Naive thymus-derived CD4-positive, alpha-beta T cell (primary cell): ENCODE measurements at regions of chr6 and their contacts with region 1.

Region 1: GRCh38 chr6:43174263-43175112 is 3.4 kb downstream of the SRF start:
- DNase-seq: peak; percentile 66 to 92 (median 88)
- ATAC-seq: peak; percentile 77
- H3K4me3 ChIP-seq: peak overlapping the region; percentile 72
- H3K4me3 Mint-ChIP-seq: peak overlapping the region; percentile 85 to 99 (median 96)
- H3K27ac ChIP-seq: peak overlapping the region; percentile 73
- H3K27ac Mint-ChIP-seq: peak overlapping the region; percentile 90 to 98 (median 94)
- H3K4me1 ChIP-seq: peaks cover 26 to 29% of the 10 kb centered on the region in 2 donors
- H3K4me1 Mint-ChIP-seq: peaks cover 35 to 49% (median 40%) of the 10 kb centered on the region in 7 donors
- H3K27me3 ChIP-seq: no peaks in the 10 kb centered on the region
- H3K27me3 Mint-ChIP-seq: peaks cover 0 to 2% (median 0%) of the 10 kb centered on the region in 5 donors

Region 2: GRCh38 chr6:42043787-42044475 is 1130.6 kb before region 1 on chr6:
- CTCF ChIA-PET with region 1: no interaction called
- POLR2A ChIA-PET with region 1: no interaction called
- intact Hi-C with region 1: loop called (anchors 5 kb)
- DNase-seq: peak; percentile 85 to 95 (median 91)
- ATAC-seq: peak; percentile 67
- H3K4me3 ChIP-seq: peak overlapping the region; percentile 59
- H3K4me3 Mint-ChIP-seq: peak overlapping the region; percentile 84 to 99 (median 95)
- H3K27ac ChIP-seq: peak overlapping the region; percentile 76
- H3K27ac Mint-ChIP-seq: peak overlapping the region; percentile 73 to 98 (median 94)
- H3K4me1 ChIP-seq: peaks cover 55 to 64% of the 10 kb centered on the region in 2 donors
- H3K4me1 Mint-ChIP-seq: peaks cover 53 to 89% (median 64%) of the 10 kb centered on the region in 7 donors
- H3K27me3 ChIP-seq: no peaks in the 10 kb centered on the region
- H3K27me3 Mint-ChIP-seq: no peaks in the 10 kb centered on the region

Region 3: DNA sequence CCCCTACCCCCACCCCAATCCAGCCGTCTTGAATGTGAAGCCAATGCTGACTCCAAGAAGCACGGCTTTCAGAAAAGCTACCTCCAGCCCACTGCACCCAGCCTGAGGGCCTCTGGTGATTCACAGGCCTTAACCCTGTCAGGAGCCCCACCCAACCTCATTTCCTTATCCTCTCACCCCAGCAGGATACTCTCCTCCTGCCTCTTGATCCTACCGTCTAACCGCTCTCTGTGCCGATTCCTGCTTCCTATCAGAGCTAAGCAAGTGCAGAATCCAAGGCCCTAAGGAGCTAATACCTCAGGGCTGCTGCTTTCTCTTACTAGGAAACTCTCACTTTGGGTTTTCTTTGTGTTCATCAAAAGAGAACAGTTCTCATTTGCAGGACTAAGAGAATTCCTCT is 770.0 kb before region 1 on chr6:
- CTCF ChIA-PET with region 1: no interaction called
- POLR2A ChIA-PET with region 1: no interaction called
- intact Hi-C with region 1: no loop called
- DNase-seq: no peak
- ATAC-seq: peak; percentile 75
- H3K4me3 ChIP-seq: no peak overlapping the region
- H3K4me3 Mint-ChIP-seq: peak overlapping the region; percentile 52 to 74 (median 68)
- H3K27ac ChIP-seq: peak overlapping the region; percentile 5
- H3K27ac Mint-ChIP-seq: peak overlapping the region; percentile 73 to 96 (median 89)
- H3K4me1 ChIP-seq: peaks cover 28 to 58% of the 10 kb centered on the region in 2 donors
- H3K4me1 Mint-ChIP-seq: peaks cover 53 to 93% (median 82%) of the 10 kb centered on the region in 7 donors
- H3K27me3 ChIP-seq: no peaks in the 10 kb centered on the region
- H3K27me3 Mint-ChIP-seq: no peaks in the 10 kb centered on the region

Region 4: DNA sequence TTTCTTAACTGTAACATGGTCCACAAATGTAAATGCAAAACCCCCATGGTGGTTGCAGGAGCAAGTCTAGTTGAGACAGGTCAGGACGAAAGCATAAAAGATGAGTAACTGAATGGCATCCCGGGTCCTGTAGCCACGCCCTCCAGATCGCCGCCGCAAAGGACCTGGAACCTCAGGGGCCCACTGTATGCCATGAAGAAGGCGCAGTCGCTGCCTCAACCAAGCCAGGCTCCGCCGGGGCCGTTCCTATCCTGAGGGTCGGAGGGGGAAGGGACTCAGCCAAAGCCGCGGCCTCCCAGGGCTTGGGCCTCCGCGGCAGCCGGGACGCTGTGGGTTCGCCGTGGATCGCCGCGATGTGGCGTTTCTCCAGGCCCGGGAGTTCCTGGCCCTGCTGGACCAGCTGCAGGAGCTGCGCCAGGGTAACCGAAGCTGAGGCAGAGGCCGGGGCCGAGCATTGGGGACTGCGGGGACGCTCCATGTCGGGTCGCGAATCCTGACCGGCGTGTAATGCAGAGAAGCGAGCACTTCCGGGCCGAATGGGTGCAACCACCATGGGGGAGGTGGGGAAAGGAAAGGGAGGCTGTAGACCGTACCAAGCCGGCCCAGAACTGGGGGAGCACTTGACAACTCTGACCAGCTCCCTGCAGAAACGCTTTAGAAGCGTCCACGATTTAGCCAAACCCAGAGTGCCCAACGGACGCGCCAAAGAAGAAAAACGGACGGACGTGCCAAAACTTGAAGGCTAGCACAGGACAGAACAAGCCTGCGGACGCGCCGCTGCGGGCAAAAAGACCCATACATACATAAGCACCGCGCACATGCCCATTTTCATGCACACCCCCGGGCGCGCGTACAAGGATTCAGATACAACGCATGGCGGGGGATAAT is 283.9 kb before region 1 on chr6:
- CTCF ChIA-PET with region 1: no interaction called
- POLR2A ChIA-PET with region 1: interaction called, 3 read pairs
- intact Hi-C with region 1: loop called in 1 of 2 experiments (anchors 1 kb)
- DNase-seq: peak; percentile 70 to 90 (median 87)
- ATAC-seq: peak; percentile 99
- H3K4me3 ChIP-seq: peak overlapping the region; percentile 89
- H3K4me3 Mint-ChIP-seq: peak overlapping the region; percentile 94 to 100 (median 98)
- H3K27ac ChIP-seq: peak overlapping the region; percentile 87
- H3K27ac Mint-ChIP-seq: peak overlapping the region; percentile 89 to 99 (median 98)
- H3K4me1 ChIP-seq: peaks cover 0 to 8% of the 10 kb centered on the region in 2 donors
- H3K4me1 Mint-ChIP-seq: peaks cover 0 to 26% (median 14%) of the 10 kb centered on the region in 7 donors
- H3K27me3 ChIP-seq: no peaks in the 10 kb centered on the region
- H3K27me3 Mint-ChIP-seq: no peaks in the 10 kb centered on the region

Region 5: DNA sequence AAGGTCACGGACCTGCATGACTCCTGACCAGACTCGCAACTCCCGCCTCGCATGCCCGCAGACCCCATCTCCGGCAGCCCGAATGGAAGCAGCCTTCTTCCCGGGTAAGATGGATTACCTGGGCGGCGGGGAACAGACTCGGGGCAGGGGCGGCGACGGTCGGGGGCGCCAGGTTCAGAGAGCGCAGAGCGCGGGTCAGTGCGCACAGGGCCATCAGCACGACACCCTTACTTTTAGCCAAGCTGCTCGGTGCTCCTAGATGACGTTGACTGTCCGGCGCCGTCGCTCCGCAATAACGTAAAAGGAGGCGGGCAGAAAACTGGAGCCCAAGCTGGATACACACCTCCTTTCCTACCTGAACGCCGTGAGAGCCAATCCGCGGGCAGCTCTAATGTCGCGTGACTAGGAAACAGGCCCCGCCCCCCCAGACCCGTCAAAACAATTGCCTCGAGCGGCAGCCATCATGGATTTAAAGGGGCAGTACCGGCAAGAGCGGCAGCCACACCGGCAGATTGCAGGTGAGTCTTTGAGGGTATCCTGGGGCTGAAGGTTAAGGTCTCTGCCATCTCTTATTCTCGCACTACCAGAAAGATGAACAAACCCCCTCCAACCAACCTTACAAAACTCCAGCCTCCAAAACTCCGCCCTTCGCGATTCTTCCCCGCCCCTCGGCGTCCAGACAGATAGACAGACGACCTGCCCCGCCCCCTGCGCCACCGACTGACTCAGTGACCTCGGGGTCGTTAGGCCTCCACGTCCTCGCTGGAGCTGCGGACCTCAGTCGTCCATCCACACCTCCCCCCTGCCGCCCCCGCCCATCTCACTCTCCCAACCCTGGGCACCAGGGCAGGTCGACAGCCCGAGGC is 115.1 kb before region 1 on chr6 and contains the starts of genes KLC4 and MRPL2:
- CTCF ChIA-PET with region 1: no interaction called
- POLR2A ChIA-PET with region 1: interaction called, 3 read pairs
- intact Hi-C with region 1: loop called (anchors 1 kb)
- DNase-seq: peak; percentile 79 to 98 (median 95)
- ATAC-seq: peak; percentile 99
- H3K4me3 ChIP-seq: peak within 1 kb of the TSS; percentile 80
- H3K4me3 Mint-ChIP-seq: peak within 1 kb of the TSS; percentile 88 to 100 (median 96)
- H3K27ac ChIP-seq: peak within 1 kb of the TSS; percentile 88
- H3K27ac Mint-ChIP-seq: peak within 1 kb of the TSS; percentile 95 to 100 (median 99)
- H3K4me1 ChIP-seq: peaks cover 0 to 21% of the 10 kb centered on the region in 2 donors
- H3K4me1 Mint-ChIP-seq: peaks cover 28 to 50% (median 45%) of the 10 kb centered on the region in 7 donors
- H3K27me3 ChIP-seq: no peaks in the 10 kb centered on the region
- H3K27me3 Mint-ChIP-seq: no peaks in the 10 kb centered on the region
- total RNA-seq, gene KLC4: 16.5 to 56.9 (median 42.5) TPM
- total RNA-seq, gene MRPL2: 32.0 to 57.5 (median 47.7) TPM

Region 6: GRCh38 chr6:43217351-43217750 is 42.9 kb after region 1 on chr6:
- CTCF ChIA-PET with region 1: no interaction called
- POLR2A ChIA-PET with region 1: no interaction called
- intact Hi-C with region 1: no loop called
- DNase-seq: no peak
- ATAC-seq: no peak
- H3K4me3 ChIP-seq: no peak overlapping the region
- H3K4me3 Mint-ChIP-seq: no peak overlapping the region
- H3K27ac ChIP-seq: no peak overlapping the region
- H3K27ac Mint-ChIP-seq: peak overlapping the region in 2 of 9 donors; percentile 11 to 45
- H3K4me1 ChIP-seq: no peaks in the 10 kb centered on the region
- H3K4me1 Mint-ChIP-seq: peaks cover 0 to 22% (median 12%) of the 10 kb centered on the region in 7 donors
- H3K27me3 ChIP-seq: no peaks in the 10 kb centered on the region
- H3K27me3 Mint-ChIP-seq: no peaks in the 10 kb centered on the region

Region 7: DNA sequence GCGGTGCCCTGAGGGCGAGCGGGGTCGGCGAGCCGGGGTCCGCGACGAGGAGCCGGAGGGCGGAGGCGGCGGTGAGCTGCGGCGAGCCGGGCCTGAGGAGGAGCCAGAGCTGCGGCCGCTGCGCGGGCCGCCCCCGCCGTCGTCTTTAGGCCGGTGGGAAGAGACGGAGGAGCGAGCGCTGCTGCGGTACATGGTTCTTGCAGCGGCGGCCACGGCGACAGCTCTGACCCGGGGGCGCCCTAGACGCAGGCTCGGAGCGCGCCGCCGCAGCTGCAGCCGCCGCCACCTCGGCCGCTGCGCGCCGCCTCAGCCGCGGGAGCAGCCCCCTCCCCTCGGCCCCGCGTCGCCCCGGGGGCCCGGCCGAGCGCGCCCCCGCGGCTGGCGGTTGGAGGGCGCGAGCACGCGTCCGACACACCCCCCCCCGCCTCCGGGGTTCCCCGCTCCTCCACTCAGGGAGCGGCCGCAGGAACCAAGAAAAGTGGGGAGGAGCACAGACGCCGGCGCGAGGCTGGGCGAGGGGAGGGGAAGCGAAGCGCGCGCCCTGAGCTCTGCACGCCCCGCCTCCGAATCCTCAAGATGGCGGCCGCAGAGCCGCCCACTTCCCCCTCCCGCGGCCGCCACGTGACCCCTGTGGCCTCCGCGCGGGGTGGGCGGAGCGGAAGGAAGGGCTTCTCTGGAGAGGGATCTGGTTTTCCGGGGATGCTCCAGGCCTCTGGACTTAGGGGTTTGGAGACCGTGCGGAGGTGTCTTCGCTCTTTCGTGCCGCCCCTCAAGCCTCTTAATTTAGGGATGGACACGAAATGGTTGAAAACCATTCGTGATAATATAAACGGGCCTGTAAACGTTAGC is 194.9 kb after region 1 on chr6 and contains the start of gene ZNF318:
- CTCF ChIA-PET with region 1: no interaction called
- POLR2A ChIA-PET with region 1: interaction called, 4 read pairs
- intact Hi-C with region 1: loop called (anchors 1 kb)
- DNase-seq: peak; percentile 85 to 95 (median 93)
- ATAC-seq: peak; percentile 97
- H3K4me3 ChIP-seq: peak within 1 kb of the TSS; percentile 90
- H3K4me3 Mint-ChIP-seq: peak within 1 kb of the TSS; percentile 75 to 97 (median 92)
- H3K27ac ChIP-seq: peak within 1 kb of the TSS; percentile 87
- H3K27ac Mint-ChIP-seq: peak within 1 kb of the TSS; percentile 91 to 98 (median 95)
- H3K4me1 ChIP-seq: peaks cover 20 to 23% of the 10 kb centered on the region in 2 donors
- H3K4me1 Mint-ChIP-seq: peaks cover 28 to 56% (median 50%) of the 10 kb centered on the region in 7 donors
- H3K27me3 ChIP-seq: no peaks in the 10 kb centered on the region
- H3K27me3 Mint-ChIP-seq: peaks cover 0 to 17% (median 0%) of the 10 kb centered on the region in 5 donors
- total RNA-seq, gene ZNF318: 15.8 to 40.2 (median 28.3) TPM

Region 8: GRCh38 chr6:43575772-43576551 is 401.5 kb after region 1 on chr6 and contains the starts of genes POLH and XPO5:
- CTCF ChIA-PET with region 1: no interaction called
- POLR2A ChIA-PET with region 1: no interaction called
- intact Hi-C with region 1: loop called (anchors 1 to 5 kb)
- DNase-seq: peak; percentile 83 to 94 (median 88)
- ATAC-seq: peak; percentile 99
- H3K4me3 ChIP-seq: peak within 1 kb of the TSS; percentile 77
- H3K4me3 Mint-ChIP-seq: peak within 1 kb of the TSS; percentile 90 to 100 (median 98)
- H3K27ac ChIP-seq: peak within 1 kb of the TSS; percentile 89
- H3K27ac Mint-ChIP-seq: peak within 1 kb of the TSS; percentile 78 to 94 (median 92)
- H3K4me1 ChIP-seq: peaks cover 20 to 21% of the 10 kb centered on the region in 2 donors
- H3K4me1 Mint-ChIP-seq: peaks cover 21 to 61% (median 40%) of the 10 kb centered on the region in 7 donors
- H3K27me3 ChIP-seq: no peaks in the 10 kb centered on the region
- H3K27me3 Mint-ChIP-seq: no peaks in the 10 kb centered on the region
- total RNA-seq, gene POLH: 9.1 to 65.6 (median 19.3) TPM
- total RNA-seq, gene XPO5: 35.0 to 107 (median 41.9) TPM